CD4-positive, alpha-beta T cell (primary cell): ENCODE measurements at regions of chr6 and their contacts with region 1.

Region 1: GRCh38 chr6:166106076-166106686 is 61.5 kb downstream of the TBXT start:
- DNase-seq: peak; percentile 2 to 74 (median 56)
- ATAC-seq: no peak
- H3K4me3 ChIP-seq: no peak overlapping the region
- H3K4me3 Mint-ChIP-seq: no peak overlapping the region
- H3K27ac ChIP-seq: no peak overlapping the region
- H3K27ac Mint-ChIP-seq: no peak overlapping the region
- H3K4me1 ChIP-seq: peaks cover 4% of the 10 kb centered on the region
- H3K4me1 Mint-ChIP-seq: no peaks in the 10 kb centered on the region
- H3K27me3 ChIP-seq: peaks cover 3 to 8% of the 10 kb centered on the region in 2 experiments
- H3K27me3 Mint-ChIP-seq: peaks cover 27% of the 10 kb centered on the region
- CTCF ChIP-seq: peak; percentile 41

Region 2: DNA sequence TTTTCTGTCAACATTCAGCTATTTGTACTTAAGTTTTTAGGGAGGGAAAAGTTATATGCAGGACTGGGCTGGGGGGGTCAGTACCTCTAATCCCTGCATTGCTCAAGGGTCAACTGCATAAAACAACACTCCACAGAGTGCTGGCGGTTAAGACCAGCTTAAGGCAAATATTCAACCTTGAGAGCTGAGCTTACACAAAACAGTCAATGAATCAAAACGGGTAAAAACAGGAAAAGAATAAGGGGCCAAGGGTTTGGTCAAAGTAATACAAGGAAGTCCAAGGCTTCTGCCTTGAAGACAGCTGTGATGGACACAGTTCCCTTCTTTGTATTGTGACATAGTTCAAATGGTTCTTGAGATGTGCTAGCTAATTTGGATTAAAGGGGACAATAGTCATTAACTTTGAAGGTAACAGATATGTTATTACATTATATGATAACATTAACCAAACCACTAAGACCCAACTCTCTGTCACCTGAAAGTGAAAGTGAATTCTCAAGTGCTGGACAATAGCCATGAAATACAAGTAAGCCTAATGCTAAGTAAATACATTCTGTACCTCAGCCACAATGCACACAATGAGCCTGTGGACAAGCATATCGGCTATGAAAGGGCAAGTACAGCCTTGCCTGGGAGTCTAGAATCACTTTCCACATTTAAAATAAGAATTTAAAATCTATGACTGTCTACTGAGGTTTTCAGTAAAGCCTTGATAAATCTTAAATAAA is 549.9 kb before region 1 on chr6:
- CTCF ChIA-PET with region 1: no interaction called
- POLR2A ChIA-PET with region 1: no interaction called
- intact Hi-C with region 1: no loop called
- DNase-seq: no peak
- ATAC-seq: no peak
- H3K4me3 ChIP-seq: no peak overlapping the region
- H3K4me3 Mint-ChIP-seq: no peak overlapping the region
- H3K27ac ChIP-seq: no peak overlapping the region
- H3K27ac Mint-ChIP-seq: no peak overlapping the region
- H3K4me1 ChIP-seq: no peaks in the 10 kb centered on the region
- H3K4me1 Mint-ChIP-seq: no peaks in the 10 kb centered on the region
- H3K27me3 ChIP-seq: no peaks in the 10 kb centered on the region
- H3K27me3 Mint-ChIP-seq: no peaks in the 10 kb centered on the region
- CTCF ChIP-seq: no peak

Region 3: DNA sequence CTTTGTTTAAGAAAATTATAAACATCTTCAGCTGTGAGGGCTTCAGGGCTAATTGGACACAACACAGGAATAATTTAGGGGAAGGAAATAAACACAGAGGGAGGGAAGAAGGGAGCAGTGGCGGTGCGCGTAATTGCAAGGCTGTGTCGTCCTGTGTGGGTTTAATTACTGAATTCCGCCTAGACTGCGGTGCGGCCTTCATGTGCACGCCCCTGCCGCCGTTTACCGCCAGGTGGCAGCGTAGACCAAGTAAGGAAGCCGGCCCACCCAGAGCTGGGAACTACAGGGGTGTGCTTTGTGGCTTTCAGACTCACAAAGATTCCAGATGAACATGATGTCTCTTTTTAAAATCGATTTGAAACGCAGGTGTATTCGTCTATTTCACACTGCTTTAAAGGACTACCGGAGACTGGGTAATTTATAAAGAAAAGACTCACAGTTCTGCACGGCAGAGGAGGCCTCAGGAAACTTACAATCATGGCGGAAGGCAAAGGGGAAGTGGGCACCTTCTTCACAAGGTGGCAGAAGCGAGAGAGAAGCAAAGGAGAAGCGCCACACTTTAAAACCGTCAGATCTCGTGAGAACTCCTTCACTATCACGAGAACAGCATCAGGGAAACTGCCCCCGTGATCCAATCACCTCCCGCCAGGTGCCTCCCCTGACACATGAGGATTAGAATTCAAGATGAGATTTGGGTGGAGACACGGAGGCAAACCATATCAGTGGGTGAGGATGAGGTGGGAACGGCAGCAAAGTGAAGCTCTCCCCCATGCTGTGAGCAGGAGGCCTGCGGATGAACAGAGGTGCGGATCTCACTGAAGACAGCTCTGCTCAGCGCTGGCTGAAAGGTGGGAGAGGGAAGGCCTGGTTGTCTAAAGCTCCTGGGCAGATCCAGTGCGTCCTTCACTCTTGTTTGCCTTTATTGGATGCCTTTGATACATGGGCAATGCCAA is 221.1 kb before region 1 on chr6:
- CTCF ChIA-PET with region 1: no interaction called
- POLR2A ChIA-PET with region 1: no interaction called
- intact Hi-C with region 1: loop called (anchors 2 to 10 kb)
- DNase-seq: peak; percentile 12 to 71 (median 44)
- ATAC-seq: peak; percentile 70
- H3K4me3 ChIP-seq: no peak overlapping the region
- H3K4me3 Mint-ChIP-seq: peak overlapping the region; percentile 28
- H3K27ac ChIP-seq: no peak overlapping the region
- H3K27ac Mint-ChIP-seq: no peak overlapping the region
- H3K4me1 ChIP-seq: peaks cover 4% of the 10 kb centered on the region
- H3K4me1 Mint-ChIP-seq: peaks cover 9% of the 10 kb centered on the region
- H3K27me3 ChIP-seq: no peaks in the 10 kb centered on the region
- H3K27me3 Mint-ChIP-seq: peaks cover 41% of the 10 kb centered on the region
- CTCF ChIP-seq: peak; percentile 50

Region 4: GRCh38 chr6:166078294-166078693 is 27.9 kb before region 1 on chr6:
- CTCF ChIA-PET with region 1: no interaction called
- POLR2A ChIA-PET with region 1: no interaction called
- intact Hi-C with region 1: no loop called
- DNase-seq: no peak
- ATAC-seq: no peak
- H3K4me3 ChIP-seq: no peak overlapping the region
- H3K4me3 Mint-ChIP-seq: no peak overlapping the region
- H3K27ac ChIP-seq: no peak overlapping the region
- H3K27ac Mint-ChIP-seq: no peak overlapping the region
- H3K4me1 ChIP-seq: no peaks in the 10 kb centered on the region
- H3K4me1 Mint-ChIP-seq: no peaks in the 10 kb centered on the region
- H3K27me3 ChIP-seq: no peaks in the 10 kb centered on the region
- H3K27me3 Mint-ChIP-seq: peaks cover 8% of the 10 kb centered on the region
- CTCF ChIP-seq: no peak

Region 5: DNA sequence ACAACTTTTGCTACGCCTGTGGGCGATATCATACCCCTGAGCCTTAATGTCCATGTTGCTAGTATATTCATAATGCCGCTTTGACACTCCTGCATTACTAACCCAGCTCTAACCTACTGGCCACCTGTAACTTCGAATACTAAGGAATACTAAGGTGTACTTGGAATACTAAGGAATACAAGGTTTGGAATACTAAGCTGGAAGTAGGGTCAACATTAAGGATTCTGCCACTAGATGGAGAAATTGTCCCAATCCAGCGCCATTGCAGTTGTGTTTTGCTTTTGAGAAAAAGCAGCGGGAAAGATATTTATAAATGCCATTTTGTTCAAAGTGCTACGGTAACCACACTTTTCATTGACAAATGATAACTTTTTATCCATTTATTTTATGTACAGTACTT is 50.8 kb after region 1 on chr6:
- CTCF ChIA-PET with region 1: no interaction called
- POLR2A ChIA-PET with region 1: no interaction called
- intact Hi-C with region 1: no loop called
- DNase-seq: no peak
- ATAC-seq: no peak
- H3K4me3 ChIP-seq: no peak overlapping the region
- H3K4me3 Mint-ChIP-seq: no peak overlapping the region
- H3K27ac ChIP-seq: no peak overlapping the region
- H3K27ac Mint-ChIP-seq: no peak overlapping the region
- H3K4me1 ChIP-seq: no peaks in the 10 kb centered on the region
- H3K4me1 Mint-ChIP-seq: no peaks in the 10 kb centered on the region
- H3K27me3 ChIP-seq: peaks cover 0 to 6% of the 10 kb centered on the region in 2 experiments
- H3K27me3 Mint-ChIP-seq: peaks cover 27% of the 10 kb centered on the region
- CTCF ChIP-seq: no peak